ENCODE measurements at regions of chr14 and their contacts with region 1.

Region 1: DNA sequence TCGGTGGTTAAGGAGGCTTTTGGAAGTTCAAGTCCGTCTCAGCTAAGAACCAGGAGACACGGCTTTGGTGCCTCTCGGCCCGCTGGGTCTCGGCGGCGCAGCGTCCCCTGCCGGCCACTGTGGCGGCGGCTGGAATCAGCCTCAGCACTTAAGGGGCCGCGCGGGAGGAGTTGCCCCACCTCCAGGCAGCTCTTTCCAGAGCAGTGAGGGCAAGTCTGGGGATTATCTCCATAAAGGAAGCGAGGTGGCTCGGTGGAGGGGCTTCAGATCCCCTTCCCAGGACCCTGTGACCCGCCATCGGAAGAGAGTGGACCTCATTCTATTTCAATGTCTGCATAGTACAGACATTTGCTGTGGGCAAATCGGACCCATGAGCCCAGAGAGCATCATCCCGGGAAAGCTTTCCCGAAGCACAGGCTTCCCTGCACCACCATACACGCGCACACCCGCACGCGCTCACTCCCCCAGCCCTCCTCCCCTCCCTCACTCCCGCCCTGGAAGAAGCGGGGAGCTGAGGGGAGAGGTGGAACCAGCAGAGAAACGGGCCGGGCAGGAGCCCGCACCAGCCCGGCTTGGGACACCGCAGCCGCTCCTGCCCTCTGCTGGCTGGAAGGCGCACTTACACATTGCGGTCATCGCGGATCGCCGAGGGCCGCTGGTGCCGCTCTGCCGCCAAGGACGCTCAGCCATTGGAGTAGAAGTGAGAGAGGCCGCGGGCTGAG is 15.9 kb downstream of the RNASE2 start:
- DNase-seq: peak; percentile 90
- H3K4me3 ChIP-seq: peak overlapping the region; percentile 58
- H3K27ac ChIP-seq: no peak overlapping the region
- H3K4me1 ChIP-seq: peaks cover 3% of the 10 kb centered on the region
- H3K27me3 ChIP-seq: no peaks in the 10 kb centered on the region
- CTCF ChIP-seq: peak; percentile 90

Region 2: DNA sequence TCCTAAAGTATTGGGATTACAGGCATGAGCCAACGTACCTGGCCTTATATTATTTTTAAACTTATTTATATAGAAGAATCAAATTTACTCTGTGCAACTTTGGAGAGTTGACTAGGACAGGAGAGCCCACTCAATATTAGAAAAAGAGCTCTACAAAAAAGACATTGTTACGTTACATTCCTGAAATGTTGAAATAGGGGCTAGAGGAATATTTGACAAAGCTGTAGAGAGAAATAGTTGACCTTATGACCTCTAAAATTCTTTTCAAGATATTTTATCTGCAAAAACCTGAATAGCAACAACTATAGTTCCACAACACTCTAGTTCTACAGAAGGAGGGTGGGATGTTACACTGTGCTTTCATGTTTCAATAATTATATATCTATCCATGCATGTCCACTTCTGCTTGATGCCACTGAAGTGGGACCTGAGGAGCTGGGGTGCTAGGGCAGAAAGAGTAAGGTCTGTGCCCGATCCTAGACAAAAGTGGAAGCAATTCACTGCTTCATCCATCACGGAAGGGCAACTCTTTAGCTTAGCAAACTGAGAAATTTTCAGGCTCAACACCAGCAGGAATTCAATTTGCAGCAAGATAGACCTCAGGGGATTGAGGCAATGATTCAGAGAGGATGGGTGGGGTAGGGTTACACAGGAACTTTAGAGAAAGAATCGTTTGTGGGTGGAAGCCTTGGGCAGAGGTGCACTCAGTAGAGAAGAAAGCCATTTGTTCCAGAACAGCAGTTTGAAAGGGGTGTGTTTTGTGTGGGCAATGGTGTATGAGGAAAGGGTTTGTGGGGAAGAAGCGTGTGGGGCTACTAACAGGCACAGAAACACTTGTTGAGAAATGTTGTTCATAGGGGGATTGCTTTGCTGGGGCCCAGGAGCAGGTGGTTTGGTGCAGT is 481.8 kb before region 1 on chr14:
- CTCF ChIA-PET with region 1: no interaction called
- POLR2A ChIA-PET with region 1: no interaction called
- intact Hi-C with region 1: no loop called
- DNase-seq: no peak
- H3K4me3 ChIP-seq: no peak overlapping the region
- H3K27ac ChIP-seq: no peak overlapping the region
- H3K4me1 ChIP-seq: no peaks in the 10 kb centered on the region
- H3K27me3 ChIP-seq: no peaks in the 10 kb centered on the region
- CTCF ChIP-seq: no peak

Region 3: GRCh38 chr14:20632682-20633428 is 338.3 kb before region 1 on chr14:
- CTCF ChIA-PET with region 1: interaction called, 3 read pairs
- POLR2A ChIA-PET with region 1: no interaction called
- intact Hi-C with region 1: loop called (anchors 2 kb)
- DNase-seq: peak; percentile 96
- H3K4me3 ChIP-seq: peak overlapping the region; percentile 58
- H3K27ac ChIP-seq: no peak overlapping the region
- H3K4me1 ChIP-seq: peaks cover 7% of the 10 kb centered on the region
- H3K27me3 ChIP-seq: peaks cover 6% of the 10 kb centered on the region
- CTCF ChIP-seq: no peak

Region 4: DNA sequence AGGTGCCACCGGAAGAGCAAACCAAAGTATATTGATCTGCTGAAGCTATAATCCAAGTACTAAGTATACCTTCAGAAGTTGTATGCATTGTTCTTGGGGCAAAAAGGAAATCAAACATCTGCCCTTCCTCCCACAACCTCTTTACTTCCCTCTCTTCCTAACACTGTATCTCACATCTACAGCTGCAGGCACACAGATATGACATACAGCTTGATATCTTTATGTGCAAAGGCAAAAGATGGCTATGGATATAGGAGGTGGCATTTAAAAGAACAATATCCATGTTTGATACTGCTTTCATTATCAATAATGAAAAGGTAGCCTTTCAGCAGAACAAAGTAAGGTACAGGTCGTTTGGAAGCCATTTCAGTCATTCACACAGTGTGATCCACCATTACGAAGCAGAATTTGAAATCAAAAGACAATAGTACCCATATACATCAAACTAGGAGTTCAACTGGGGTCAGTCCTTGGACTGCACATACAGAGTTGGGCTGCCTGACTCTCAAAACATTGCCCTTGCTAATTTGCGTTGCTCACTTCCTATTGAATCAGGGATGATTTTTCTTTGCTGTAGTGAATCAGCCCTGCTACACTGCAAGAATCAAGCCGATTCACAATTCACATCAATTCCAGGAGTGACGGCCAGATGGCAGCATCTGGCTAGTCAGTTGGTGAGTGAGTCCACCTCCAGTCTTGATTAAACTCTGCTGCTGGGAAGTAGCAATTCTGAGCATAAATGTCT is 273.7 kb before region 1 on chr14:
- CTCF ChIA-PET with region 1: interaction called, 3 read pairs
- POLR2A ChIA-PET with region 1: no interaction called
- intact Hi-C with region 1: loop called (anchors 1 kb)
- DNase-seq: peak; percentile 77
- H3K4me3 ChIP-seq: no peak overlapping the region
- H3K27ac ChIP-seq: no peak overlapping the region
- H3K4me1 ChIP-seq: no peaks in the 10 kb centered on the region
- H3K27me3 ChIP-seq: no peaks in the 10 kb centered on the region
- CTCF ChIP-seq: peak; percentile 77

Region 5: GRCh38 chr14:20855652-20856291 is 115.4 kb before region 1 on chr14:
- CTCF ChIA-PET with region 1: interaction called, 21 read pairs
- POLR2A ChIA-PET with region 1: no interaction called
- intact Hi-C with region 1: loop called (anchors 1 kb)
- DNase-seq: peak; percentile 78
- H3K4me3 ChIP-seq: no peak overlapping the region
- H3K27ac ChIP-seq: no peak overlapping the region
- H3K4me1 ChIP-seq: no peaks in the 10 kb centered on the region
- H3K27me3 ChIP-seq: peaks cover 29% of the 10 kb centered on the region
- CTCF ChIP-seq: peak; percentile 70

Region 6: GRCh38 chr14:20873370-20874177 is 97.6 kb before region 1 on chr14:
- CTCF ChIA-PET with region 1: interaction called, 4 read pairs
- POLR2A ChIA-PET with region 1: no interaction called
- intact Hi-C with region 1: loop called (anchors 5 kb)
- DNase-seq: peak; percentile 97
- H3K4me3 ChIP-seq: peak overlapping the region; percentile 30
- H3K27ac ChIP-seq: peak overlapping the region; percentile 25
- H3K4me1 ChIP-seq: peaks cover 4% of the 10 kb centered on the region
- H3K27me3 ChIP-seq: peaks cover 13% of the 10 kb centered on the region
- CTCF ChIP-seq: peak; percentile 98

Region 7: GRCh38 chr14:20956376-20956976 is 14.7 kb before region 1 on chr14:
- CTCF ChIA-PET with region 1: interaction called, 14 read pairs
- POLR2A ChIA-PET with region 1: interaction called, 4 read pairs
- intact Hi-C with region 1: no loop called
- DNase-seq: no peak
- H3K4me3 ChIP-seq: no peak overlapping the region
- H3K27ac ChIP-seq: no peak overlapping the region
- H3K4me1 ChIP-seq: peaks cover 2% of the 10 kb centered on the region
- H3K27me3 ChIP-seq: no peaks in the 10 kb centered on the region
- CTCF ChIP-seq: no peak

Region 8: GRCh38 chr14:20997115-20997514 is 26.0 kb after region 1 on chr14:
- CTCF ChIA-PET with region 1: interaction called, 11 read pairs
- POLR2A ChIA-PET with region 1: no interaction called
- intact Hi-C with region 1: no loop called
- DNase-seq: no peak
- H3K4me3 ChIP-seq: no peak overlapping the region
- H3K27ac ChIP-seq: no peak overlapping the region
- H3K4me1 ChIP-seq: peaks cover 8% of the 10 kb centered on the region
- H3K27me3 ChIP-seq: no peaks in the 10 kb centered on the region
- CTCF ChIP-seq: no peak

Region 9: GRCh38 chr14:21203470-21204166 is 232.5 kb after region 1 on chr14:
- CTCF ChIA-PET with region 1: no interaction called
- POLR2A ChIA-PET with region 1: no interaction called
- intact Hi-C with region 1: no loop called
- DNase-seq: no peak
- H3K4me3 ChIP-seq: no peak overlapping the region
- H3K27ac ChIP-seq: no peak overlapping the region
- H3K4me1 ChIP-seq: no peaks in the 10 kb centered on the region
- H3K27me3 ChIP-seq: no peaks in the 10 kb centered on the region
- CTCF ChIP-seq: no peak